ENCODE measurements at regions of chr1 and their contacts with region 1.

Region 1: GRCh38 chr1:214261206-214262123 is 19.5 kb upstream of the SMYD2 start:
- DNase-seq: no peak
- ATAC-seq: peak; percentile 99
- H3K4me3 ChIP-seq: no peak overlapping the region
- H3K27ac ChIP-seq: no peak overlapping the region
- H3K4me1 ChIP-seq: no peaks in the 10 kb centered on the region
- H3K27me3 ChIP-seq: peaks cover 2 to 3% of the 10 kb centered on the region in 2 experiments; a peak in 1 of 4 replicates
- CTCF ChIP-seq: peak; percentile 91 to 98 (median 95); a peak in 5 of 6 replicates
- EP300 ChIP-seq: no peak
- POLR2A ChIP-seq: no peak
- RAD21 ChIP-seq: peak; percentile 87

Region 2: DNA sequence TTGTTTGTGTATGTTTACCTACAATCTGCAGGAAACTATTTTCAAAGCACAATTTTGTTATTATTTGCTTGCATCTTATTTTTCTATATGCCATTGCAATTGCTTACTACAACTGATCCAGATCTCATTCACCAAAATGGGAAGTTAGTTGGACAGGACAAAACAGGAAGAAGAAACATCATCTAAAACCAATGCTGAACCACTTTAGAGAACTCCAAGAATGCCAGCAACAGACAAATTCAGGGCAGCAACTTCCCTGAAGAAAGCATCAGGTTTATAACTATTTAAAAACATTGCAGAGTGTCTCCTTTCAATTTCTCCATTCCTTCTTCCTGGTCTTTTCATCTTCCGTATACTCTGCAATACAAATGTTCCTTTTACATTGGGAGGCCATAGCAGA is 62.9 kb before region 1 on chr1:
- CTCF ChIA-PET with region 1: interaction called, 12 read pairs
- POLR2A ChIA-PET with region 1: no interaction called
- RAD21 ChIA-PET with region 1: no interaction called
- SMC1A ChIA-PET with region 1: no interaction called
- in situ Hi-C with region 1: no loop called
- intact Hi-C with region 1: no loop called
- DNase-seq: no peak
- ATAC-seq: no peak
- H3K4me3 ChIP-seq: no peak overlapping the region
- H3K27ac ChIP-seq: no peak overlapping the region
- H3K4me1 ChIP-seq: no peaks in the 10 kb centered on the region
- H3K27me3 ChIP-seq: no peaks in the 10 kb centered on the region
- CTCF ChIP-seq: no peak
- EP300 ChIP-seq: no peak
- POLR2A ChIP-seq: no peak
- RAD21 ChIP-seq: no peak

Region 3: DNA sequence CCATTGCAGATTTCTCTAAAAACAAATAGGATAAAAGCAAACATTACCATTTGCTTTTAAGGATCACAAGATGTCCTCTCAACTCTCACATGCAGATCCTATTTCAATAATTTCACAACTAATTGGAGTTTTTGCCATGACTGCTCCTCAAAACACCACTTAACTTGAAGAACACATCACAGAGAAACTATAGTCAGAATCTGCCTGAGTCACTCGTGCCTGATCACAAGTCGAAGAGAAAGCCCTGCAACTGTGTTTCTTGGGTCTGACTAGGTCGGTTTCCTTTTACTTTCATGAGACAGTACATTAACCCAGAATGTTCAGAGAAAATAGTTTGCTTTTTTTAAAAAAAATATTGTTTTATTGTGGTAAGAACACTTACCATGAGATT is 26.8 kb before region 1 on chr1:
- CTCF ChIA-PET with region 1: interaction called, 15 read pairs
- POLR2A ChIA-PET with region 1: no interaction called
- RAD21 ChIA-PET with region 1: no interaction called
- SMC1A ChIA-PET with region 1: no interaction called
- in situ Hi-C with region 1: no loop called
- intact Hi-C with region 1: no loop called
- DNase-seq: no peak
- ATAC-seq: no peak
- H3K4me3 ChIP-seq: no peak overlapping the region
- H3K27ac ChIP-seq: no peak overlapping the region
- H3K4me1 ChIP-seq: no peaks in the 10 kb centered on the region
- H3K27me3 ChIP-seq: no peaks in the 10 kb centered on the region; a peak in 1 of 4 replicates
- CTCF ChIP-seq: no peak
- EP300 ChIP-seq: no peak
- POLR2A ChIP-seq: no peak
- RAD21 ChIP-seq: no peak

Region 4: DNA sequence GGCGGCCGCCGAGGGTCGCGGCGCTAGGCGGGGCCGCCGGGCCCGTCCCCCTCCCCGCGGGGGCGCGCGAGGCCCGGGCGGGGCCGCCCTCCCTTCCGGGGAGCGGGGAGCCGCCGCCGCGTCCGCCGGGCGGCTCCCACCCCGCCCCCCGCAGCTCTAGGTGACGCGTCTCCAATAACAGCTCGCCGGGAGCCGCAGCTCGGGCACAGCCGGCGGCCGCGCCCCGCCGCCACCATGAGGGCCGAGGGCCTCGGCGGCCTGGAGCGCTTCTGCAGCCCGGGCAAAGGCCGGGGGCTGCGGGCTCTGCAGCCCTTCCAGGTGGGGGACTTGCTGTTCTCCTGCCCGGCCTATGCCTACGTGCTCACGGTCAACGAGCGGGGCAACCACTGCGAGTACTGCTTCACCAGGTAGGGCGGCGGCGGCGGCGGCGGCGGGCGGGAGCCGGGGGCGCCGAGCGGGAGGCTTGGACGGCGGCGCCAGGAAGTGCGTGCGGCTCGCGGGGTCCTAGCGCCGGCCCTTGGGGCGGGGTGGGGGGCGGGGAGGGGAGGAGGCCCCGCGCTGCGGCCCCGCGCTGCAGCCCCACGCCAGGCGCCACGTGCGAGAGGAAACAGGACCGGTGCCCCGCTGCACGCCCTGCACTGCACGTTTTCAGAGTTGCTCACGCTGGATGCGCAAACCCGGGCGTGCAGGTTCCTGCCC is 19.7 kb after region 1 on chr1 and contains the start of gene SMYD2:
- CTCF ChIA-PET with region 1: interaction called, 25 read pairs
- POLR2A ChIA-PET with region 1: no interaction called
- RAD21 ChIA-PET with region 1: interaction called, 10 read pairs
- SMC1A ChIA-PET with region 1: interaction called, 3 read pairs
- in situ Hi-C with region 1: no loop called
- intact Hi-C with region 1: no loop called
- DNase-seq: no peak
- ATAC-seq: peak; percentile 86
- H3K4me3 ChIP-seq: peak within 1 kb of the TSS; percentile 90
- H3K27ac ChIP-seq: peak within 1 kb of the TSS; percentile 71
- H3K4me1 ChIP-seq: no peaks in the 10 kb centered on the region; the same call in 1 of the 2 replicates
- H3K27me3 ChIP-seq: no peaks in the 10 kb centered on the region
- CTCF ChIP-seq: no peak
- EP300 ChIP-seq: no peak
- POLR2A ChIP-seq: peak; percentile 75
- RAD21 ChIP-seq: no peak
- polyA plus RNA-seq, gene SMYD2: 8.3 to 17.0 TPM

Region 5: GRCh38 chr1:214303141-214303930 is 41.9 kb after region 1 on chr1:
- CTCF ChIA-PET with region 1: interaction called, 13 read pairs
- POLR2A ChIA-PET with region 1: no interaction called
- RAD21 ChIA-PET with region 1: interaction called, 3 read pairs
- SMC1A ChIA-PET with region 1: no interaction called
- in situ Hi-C with region 1: no loop called
- intact Hi-C with region 1: no loop called
- DNase-seq: no peak
- ATAC-seq: no peak
- H3K4me3 ChIP-seq: no peak overlapping the region
- H3K27ac ChIP-seq: no peak overlapping the region
- H3K4me1 ChIP-seq: no peaks in the 10 kb centered on the region
- H3K27me3 ChIP-seq: no peaks in the 10 kb centered on the region
- CTCF ChIP-seq: no peak
- EP300 ChIP-seq: no peak
- POLR2A ChIP-seq: no peak
- RAD21 ChIP-seq: no peak

Region 6: DNA sequence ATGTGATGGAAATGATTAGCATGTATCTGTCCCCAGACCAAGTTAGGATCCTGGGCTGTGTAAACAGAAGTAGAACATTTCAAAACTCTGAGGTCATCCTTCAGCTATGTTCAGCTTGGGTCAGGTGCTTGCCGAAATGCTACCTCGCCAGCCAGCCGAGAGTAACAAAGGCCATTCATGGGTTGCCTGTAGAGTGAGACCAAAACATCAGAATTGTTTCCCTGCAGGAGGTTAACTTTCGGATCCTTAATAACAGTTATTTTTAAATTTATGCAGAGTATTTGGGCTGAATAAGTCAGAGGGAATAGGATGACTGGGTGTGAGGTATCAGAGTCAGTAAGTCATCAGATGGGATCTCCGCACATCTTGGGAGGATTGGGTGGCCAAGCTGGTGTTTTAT is 55.1 kb after region 1 on chr1:
- CTCF ChIA-PET with region 1: interaction called, 25 read pairs
- POLR2A ChIA-PET with region 1: no interaction called
- RAD21 ChIA-PET with region 1: interaction called, 7 read pairs
- SMC1A ChIA-PET with region 1: interaction called, 18 read pairs
- in situ Hi-C with region 1: no loop called
- intact Hi-C with region 1: no loop called
- DNase-seq: no peak
- ATAC-seq: no peak; the same call in 2 of the 3 replicates
- H3K4me3 ChIP-seq: no peak overlapping the region
- H3K27ac ChIP-seq: no peak overlapping the region
- H3K4me1 ChIP-seq: peaks cover 7% of the 10 kb centered on the region
- H3K27me3 ChIP-seq: no peaks in the 10 kb centered on the region
- CTCF ChIP-seq: no peak
- EP300 ChIP-seq: no peak
- POLR2A ChIP-seq: no peak
- RAD21 ChIP-seq: no peak

Region 7: DNA sequence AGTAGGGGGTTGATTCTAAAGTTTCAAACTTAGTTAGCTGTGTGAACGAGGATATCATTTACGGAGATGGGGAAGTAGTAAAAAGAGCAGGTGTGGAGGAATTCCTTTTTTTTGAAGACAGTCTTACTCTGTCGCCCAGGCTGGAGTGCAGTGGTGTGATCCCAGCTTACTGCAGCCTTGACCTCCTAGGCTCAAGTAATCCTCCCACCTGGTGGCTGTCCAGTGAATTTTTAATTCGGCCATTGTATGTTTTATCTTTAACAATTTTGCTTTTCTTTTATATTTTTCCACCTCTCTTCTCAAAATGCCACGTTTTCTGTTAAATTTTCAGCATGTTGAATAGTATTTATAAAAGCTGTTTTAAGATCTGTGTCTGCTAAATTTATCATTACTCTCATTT is 329.2 kb after region 1 on chr1:
- CTCF ChIA-PET with region 1: interaction called, 28 read pairs
- POLR2A ChIA-PET with region 1: no interaction called
- RAD21 ChIA-PET with region 1: interaction called, 8 read pairs
- SMC1A ChIA-PET with region 1: interaction called, 8 read pairs
- in situ Hi-C with region 1: no loop called
- intact Hi-C with region 1: loop called (anchors 5 kb)
- DNase-seq: no peak
- ATAC-seq: no peak
- H3K4me3 ChIP-seq: no peak overlapping the region
- H3K27ac ChIP-seq: no peak overlapping the region
- H3K4me1 ChIP-seq: no peaks in the 10 kb centered on the region
- H3K27me3 ChIP-seq: no peaks in the 10 kb centered on the region
- CTCF ChIP-seq: no peak
- EP300 ChIP-seq: no peak
- POLR2A ChIP-seq: no peak
- RAD21 ChIP-seq: no peak